OCI-LY7 (cell line): ENCODE measurements at regions of chr5 and their contacts with region 1.

Region 1: DNA sequence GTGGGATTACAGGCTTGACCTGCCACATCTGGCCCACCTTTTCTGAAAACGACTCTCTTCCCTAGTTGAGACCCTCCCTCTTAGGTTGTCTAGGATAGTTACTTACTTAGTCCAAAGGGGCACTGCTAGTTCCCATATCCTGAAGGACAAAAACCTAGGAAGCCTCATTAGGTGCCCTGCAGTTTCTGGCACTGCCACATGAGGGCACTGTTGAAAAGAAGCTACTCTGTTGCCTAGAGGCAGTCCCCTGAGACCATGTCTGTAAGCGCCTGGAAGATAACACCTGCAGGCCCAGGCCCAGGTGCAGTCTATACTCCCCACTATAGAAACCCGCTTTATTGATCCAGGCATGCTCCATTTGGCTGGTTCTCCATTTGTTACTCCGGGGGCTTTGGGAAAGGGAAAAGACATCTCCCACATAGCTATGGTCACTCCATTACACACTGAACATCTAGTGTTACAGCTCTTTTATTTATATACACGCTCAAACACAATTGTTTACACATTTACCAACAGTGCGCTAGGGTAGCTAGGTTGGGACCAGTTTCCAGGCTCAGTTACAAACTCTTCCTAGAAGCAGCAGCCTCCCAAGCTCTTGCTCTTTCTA is 73.4 kb upstream of the PPARGC1B start:
- DNase-seq: peak; percentile 88
- H3K4me3 ChIP-seq: no peak overlapping the region
- H3K27ac ChIP-seq: no peak overlapping the region
- H3K4me1 ChIP-seq: peaks cover 41% of the 10 kb centered on the region
- CTCF ChIP-seq: peak; percentile 98

Region 2: DNA sequence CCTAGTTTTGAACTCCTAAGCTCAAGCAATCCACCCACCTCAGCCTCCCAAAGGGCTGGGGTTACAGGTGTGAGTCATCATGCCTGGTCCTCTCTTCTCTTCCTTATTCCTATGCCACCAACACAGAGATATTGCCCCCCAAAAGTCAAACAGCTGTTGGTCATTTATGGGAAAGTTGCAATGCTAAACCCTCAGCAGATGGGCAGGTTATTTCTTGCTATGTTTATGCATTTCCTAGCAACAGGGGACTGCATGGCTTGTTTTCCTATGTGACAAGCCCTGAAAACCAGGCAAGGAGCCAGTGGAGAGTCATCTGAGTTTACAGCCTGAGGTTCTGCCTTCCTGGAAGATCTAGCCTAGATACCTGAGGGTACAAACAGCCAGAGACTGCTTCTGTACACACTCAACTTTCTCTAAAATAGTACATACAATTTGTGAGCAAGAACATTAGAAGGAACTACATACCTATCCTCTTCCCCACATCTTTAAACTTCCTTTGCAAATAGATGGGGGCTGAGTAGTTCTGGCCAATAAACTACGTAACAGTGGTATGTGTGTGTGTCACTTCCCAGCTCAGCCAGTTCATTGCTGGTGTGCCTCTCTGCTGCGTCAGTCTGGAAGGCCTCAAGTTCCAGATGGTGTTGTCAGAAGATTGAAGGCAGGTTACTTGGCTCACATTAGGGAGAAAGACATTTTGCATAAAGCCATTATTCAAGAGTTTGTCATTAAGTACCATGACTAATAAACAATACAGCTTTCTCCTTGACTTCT is 170.8 kb before region 1 on chr5:
- CTCF ChIA-PET with region 1: no interaction called
- POLR2A ChIA-PET with region 1: no interaction called
- intact Hi-C with region 1: no loop called
- DNase-seq: no peak
- H3K4me3 ChIP-seq: no peak overlapping the region
- H3K27ac ChIP-seq: no peak overlapping the region
- H3K4me1 ChIP-seq: no peaks in the 10 kb centered on the region
- CTCF ChIP-seq: no peak

Region 3: DNA sequence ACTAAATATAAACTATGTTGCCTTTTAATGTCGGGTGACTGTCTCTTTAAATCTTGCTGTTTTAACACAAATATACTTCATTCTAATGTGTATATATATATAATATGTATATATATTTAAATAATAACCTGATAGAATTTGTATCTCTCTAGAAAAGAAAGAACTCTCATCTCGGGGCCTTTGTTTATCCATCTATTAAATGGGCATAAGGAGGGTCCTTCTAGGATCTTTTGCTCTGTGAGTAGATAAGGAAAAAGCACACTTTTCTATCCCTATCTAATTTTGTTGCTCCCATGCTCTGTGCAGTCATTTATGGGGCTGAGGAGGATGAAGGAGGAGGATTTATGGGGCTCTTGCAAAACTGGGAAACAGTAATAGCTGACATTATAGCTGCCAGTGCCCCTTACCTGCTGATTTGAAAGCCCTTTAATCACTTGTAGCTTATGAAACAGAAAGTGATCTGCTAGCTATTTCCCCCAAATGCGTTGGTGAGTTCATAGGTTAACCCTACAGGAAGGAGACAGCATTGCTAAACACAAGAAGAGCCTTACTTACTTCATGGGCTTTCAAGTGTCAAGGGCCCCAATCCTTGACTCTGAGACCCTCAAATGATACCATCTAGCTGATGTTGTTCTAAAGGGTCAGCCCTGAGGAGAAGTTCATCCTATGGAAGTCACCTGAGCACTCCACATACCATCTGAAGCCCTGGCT is 67.6 kb after region 1 on chr5:
- CTCF ChIA-PET with region 1: no interaction called
- POLR2A ChIA-PET with region 1: no interaction called
- intact Hi-C with region 1: no loop called
- DNase-seq: peak; percentile 33
- H3K4me3 ChIP-seq: no peak overlapping the region
- H3K27ac ChIP-seq: no peak overlapping the region
- H3K4me1 ChIP-seq: peaks cover 6% of the 10 kb centered on the region
- CTCF ChIP-seq: no peak

Region 4: GRCh38 chr5:149782018-149782894 is 125.6 kb after region 1 on chr5:
- CTCF ChIA-PET with region 1: interaction called, 6 read pairs
- POLR2A ChIA-PET with region 1: interaction called, 5 read pairs
- intact Hi-C with region 1: loop called (anchors 2 kb)
- DNase-seq: no peak
- H3K4me3 ChIP-seq: no peak overlapping the region
- H3K27ac ChIP-seq: peak overlapping the region; percentile 8
- H3K4me1 ChIP-seq: peaks cover 46% of the 10 kb centered on the region
- CTCF ChIP-seq: no peak

Region 5: GRCh38 chr5:149828161-149828884 is 171.6 kb after region 1 on chr5:
- CTCF ChIA-PET with region 1: no interaction called
- POLR2A ChIA-PET with region 1: no interaction called
- intact Hi-C with region 1: loop called (anchors 1 kb)
- DNase-seq: peak; percentile 87
- H3K4me3 ChIP-seq: no peak overlapping the region
- H3K27ac ChIP-seq: no peak overlapping the region
- H3K4me1 ChIP-seq: peaks cover 3% of the 10 kb centered on the region
- CTCF ChIP-seq: peak; percentile 91